GM18951 (cell line): ENCODE measurements at regions of chr5 and their contacts with region 1.

Region 1: DNA sequence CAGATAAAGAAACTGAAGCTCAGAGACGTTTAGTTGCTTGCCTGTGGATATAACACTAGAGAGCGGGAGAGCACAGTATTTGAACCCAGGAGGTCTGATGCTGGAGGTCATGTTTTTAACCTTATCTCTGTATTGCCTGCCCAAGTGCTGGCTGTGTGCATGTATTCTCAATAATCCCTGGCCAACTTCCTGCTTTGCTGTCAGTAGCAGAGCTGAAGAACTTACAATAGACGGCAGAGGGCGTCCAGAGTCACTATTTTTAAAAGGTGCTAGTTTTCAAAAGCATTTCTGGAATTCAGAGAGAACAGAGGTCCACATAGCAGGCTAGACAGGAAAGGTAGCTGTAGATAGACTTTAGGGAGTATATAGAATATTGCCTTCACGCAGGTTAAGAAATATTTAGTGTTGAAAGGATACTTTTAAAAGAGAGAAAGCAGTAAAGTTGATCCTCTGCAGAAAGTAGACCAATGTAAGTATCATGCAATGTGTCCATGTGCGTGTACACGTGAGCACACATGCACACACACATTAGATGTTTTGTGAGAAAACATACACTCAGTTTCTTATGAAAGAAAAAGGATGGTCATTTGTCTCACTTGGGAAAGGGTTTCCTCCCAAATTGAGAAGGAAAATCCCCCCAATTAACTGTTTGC is 46.3 kb downstream of the PTCD2 start:
- POLR2A ChIP-seq: no peak

Region 2: GRCh38 chr5:72412283-72413055 is 46.0 kb after region 1 on chr5:
- in situ Hi-C with region 1: no loop called
- POLR2A ChIP-seq: no peak

Region 3: DNA sequence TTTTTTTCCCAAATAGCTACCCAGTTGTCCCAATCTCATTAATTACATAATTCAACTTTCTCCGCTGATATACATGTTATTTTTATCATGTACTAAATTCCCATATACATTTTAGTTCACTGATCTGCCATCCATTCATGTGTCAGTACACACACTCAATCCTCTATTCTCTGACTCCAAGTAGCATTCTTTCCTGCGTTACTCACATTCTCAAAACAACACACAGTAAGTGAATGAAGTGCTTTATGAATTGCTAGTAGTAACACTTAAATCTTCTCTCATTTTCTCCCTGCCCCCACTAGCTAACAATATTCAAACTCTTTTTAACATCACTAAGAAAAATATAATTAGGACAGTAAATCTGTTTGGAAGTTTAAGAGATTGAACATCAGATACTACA is 131.8 kb after region 1 on chr5:
- in situ Hi-C with region 1: no loop called
- POLR2A ChIP-seq: no peak

Region 4: DNA sequence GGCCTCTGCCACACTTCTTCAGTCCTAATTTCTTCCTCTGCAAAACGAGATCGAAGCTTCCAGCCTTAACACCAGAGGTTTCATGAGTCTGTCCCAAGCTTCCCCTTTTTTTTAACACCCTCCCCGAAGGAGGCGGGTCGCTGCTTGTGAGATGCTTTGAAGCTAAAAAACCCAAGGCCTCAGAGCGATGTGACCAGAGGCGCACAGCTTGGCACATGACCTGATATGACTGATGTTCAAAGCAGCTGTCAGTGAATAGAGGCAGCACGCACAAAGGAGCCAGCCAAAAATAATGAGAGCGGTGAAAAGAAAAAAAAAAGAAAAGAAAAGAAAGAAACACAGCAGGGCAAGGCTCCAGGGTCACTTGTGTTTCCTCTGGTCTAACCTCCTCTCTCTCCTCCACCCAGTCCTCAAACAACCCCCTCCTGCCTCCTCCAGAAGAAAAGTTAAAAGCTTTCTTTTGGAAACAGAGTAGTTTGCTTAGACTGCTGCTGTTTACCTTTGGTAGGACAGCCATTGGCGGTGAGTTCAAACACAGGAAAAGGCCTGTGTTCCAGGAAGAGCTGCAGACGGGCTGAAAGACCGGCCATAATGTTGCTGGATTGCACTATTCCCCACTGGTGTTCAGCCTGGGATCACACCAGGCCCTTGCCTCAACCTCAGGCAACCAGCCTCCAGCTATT is 151.7 kb after region 1 on chr5:
- in situ Hi-C with region 1: loop called (anchors 5 kb)
- POLR2A ChIP-seq: no peak

Region 5: GRCh38 chr5:72816311-72817145 is 450.1 kb after region 1 on chr5 and contains the start of gene TNPO1:
- in situ Hi-C with region 1: loop called (anchors 25 kb)
- POLR2A ChIP-seq: peak; percentile 97